ENCODE measurements at regions of chr6 and their contacts with region 1.

Region 1: DNA sequence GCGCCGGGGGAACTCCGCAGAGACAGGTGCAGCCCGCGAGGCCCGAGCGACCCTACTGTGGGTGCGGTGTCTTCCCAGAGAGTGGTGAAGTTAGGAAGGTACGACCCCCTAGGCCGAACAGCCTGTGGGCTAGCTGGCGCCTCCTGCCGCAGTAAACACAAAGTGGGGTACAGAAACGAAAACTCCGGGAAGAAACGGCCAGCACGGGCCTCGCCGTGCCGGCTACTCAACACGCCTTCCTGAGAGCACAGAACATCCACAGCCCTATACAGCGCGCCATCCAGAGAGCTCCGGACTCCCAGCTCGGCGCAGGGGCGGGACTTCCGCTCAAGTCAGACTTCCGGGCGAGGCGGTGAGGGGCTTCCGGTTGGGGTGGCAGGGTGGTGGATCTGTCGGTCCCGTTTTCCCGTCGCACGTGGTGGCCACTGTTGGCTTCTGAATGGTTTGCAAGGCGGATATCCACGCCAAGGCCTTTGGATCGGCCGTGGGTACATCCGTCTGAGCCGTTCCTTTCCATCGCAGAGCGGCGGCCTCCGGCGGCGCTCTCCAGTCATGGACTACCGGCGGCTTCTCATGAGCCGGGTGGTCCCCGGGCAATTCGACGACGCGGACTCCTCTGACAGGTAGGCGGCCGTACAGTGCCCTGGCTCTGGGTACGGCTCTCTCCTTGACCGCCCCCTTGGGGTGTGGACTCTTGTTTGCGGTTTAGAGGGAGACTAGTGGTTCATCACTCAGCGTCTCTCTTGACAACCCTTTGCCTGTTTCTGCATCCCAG is at the starts of genes CAGE1 and RIOK1:
- DNase-seq: peak; percentile 86 to 96
- H3K4me3 ChIP-seq: peak within 1 kb of the TSS; percentile 80
- H3K27ac ChIP-seq: peak within 1 kb of the TSS; percentile 89
- H3K4me1 ChIP-seq: peaks cover 19% of the 10 kb centered on the region
- H3K27me3 ChIP-seq: no peaks in the 10 kb centered on the region
- CTCF ChIP-seq: 0 out of 2 replicates have a peak, but pooled peaks have one; percentile 29
- total RNA-seq, gene CAGE1: 0.13 TPM in 2 replicates
- total RNA-seq, gene RIOK1: 16.9 and 24.9 TPM in 2 replicates

Region 2: DNA sequence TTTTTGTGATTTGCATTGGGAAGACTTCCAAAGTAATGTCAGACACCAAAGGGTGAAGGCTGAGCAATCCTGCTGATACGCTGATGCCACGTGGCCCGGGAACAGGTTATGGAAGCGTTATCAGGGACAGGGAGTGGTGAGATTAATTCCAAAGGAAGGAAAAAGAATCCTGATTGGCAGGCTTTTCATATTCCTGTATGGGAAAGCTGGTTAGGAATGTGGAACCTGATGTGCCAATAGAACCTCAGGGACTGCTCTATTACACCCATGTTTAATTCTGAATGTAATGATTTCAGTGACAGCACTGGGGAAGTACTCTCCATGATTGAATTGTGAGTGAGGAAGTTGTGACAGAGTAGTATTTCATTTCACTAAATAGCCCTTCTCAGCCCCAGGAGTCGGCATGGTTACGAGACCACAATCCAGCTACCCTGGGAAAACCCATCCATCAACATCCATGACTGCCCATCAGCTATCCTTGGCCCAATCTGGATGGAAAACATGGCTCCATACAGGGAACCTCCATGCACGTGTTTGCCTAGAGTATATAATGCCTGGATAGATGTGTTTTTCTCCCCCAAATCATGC is 1118.6 kb before region 1 on chr6:
- CTCF ChIA-PET with region 1: no interaction called
- POLR2A ChIA-PET with region 1: no interaction called
- intact Hi-C with region 1: no loop called
- DNase-seq: no peak
- H3K4me3 ChIP-seq: no peak overlapping the region
- H3K27ac ChIP-seq: no peak overlapping the region
- H3K4me1 ChIP-seq: no peaks in the 10 kb centered on the region
- H3K27me3 ChIP-seq: no peaks in the 10 kb centered on the region
- CTCF ChIP-seq: no peak

Region 3: DNA sequence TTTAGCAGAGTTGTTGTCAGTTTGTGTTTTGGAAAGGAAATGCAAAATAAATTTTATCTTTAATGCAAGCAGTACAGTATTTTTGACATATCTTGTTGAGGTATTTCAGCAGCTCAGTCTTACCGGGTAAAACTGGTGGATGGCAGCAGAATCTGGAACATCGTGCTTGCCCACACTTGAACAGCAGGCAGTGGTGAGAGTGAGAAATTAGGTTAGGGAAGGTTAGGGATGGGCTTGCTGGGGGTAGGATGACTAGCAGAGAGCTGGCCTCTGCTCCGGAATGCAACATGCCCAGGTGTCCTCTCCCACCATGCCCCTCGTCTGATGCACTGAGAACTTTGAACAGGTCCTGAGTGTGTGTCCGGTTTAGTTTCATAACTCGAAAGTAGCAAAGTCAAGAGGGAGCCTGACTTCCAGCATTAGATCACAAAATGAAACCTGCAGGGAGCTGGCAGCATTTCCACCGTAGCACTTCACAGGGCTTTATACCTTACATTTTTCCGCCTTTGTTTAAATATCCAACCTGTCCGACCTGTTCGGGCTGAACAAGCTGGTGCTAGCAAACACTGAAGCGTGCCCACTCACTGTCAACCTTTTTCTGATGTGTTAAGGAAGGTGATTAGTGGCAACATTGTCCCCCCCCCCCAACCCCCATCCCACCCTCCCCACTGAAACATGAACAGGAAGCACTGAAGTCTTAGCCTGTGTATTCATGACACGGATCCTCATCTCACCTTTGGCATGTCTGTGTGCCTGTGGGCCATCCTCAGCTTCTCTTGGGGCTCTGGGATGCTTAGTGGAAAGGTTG is 188.6 kb before region 1 on chr6:
- CTCF ChIA-PET with region 1: no interaction called
- POLR2A ChIA-PET with region 1: no interaction called
- intact Hi-C with region 1: no loop called
- DNase-seq: peak; percentile 74 to 88
- H3K4me3 ChIP-seq: peak overlapping the region; percentile 39; the same call in 1 of the 2 replicates
- H3K27ac ChIP-seq: peak overlapping the region; percentile 92
- H3K4me1 ChIP-seq: peaks cover 36% of the 10 kb centered on the region
- H3K27me3 ChIP-seq: no peaks in the 10 kb centered on the region
- CTCF ChIP-seq: no peak

Region 4: DNA sequence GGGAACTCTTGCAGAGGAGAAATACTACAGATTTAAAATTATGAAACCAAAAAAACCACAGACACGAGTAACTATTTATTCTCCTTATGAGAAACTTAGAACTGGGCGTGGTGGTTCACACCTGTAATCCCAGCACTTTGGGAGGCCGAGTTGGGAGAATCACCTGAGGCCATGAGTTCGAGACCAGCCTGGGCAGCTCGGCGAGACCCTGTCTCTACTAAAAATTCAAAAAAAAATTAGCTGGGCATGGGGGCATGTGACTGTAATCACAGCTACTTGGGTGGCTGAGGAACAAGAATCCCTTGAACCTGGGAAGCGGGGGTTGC is 113.5 kb before region 1 on chr6:
- CTCF ChIA-PET with region 1: no interaction called
- POLR2A ChIA-PET with region 1: no interaction called
- intact Hi-C with region 1: loop called (anchors 1 kb)
- DNase-seq: no peak
- H3K4me3 ChIP-seq: no peak overlapping the region
- H3K27ac ChIP-seq: no peak overlapping the region
- H3K4me1 ChIP-seq: no peaks in the 10 kb centered on the region
- H3K27me3 ChIP-seq: no peaks in the 10 kb centered on the region
- CTCF ChIP-seq: no peak; the same call in 1 of the 2 replicates

Region 5: GRCh38 chr6:7312616-7313504 is 76.8 kb before region 1 on chr6 and contains the start of gene SSR1:
- CTCF ChIA-PET with region 1: no interaction called
- POLR2A ChIA-PET with region 1: interaction called, 9 read pairs
- intact Hi-C with region 1: loop called (anchors 1 kb)
- DNase-seq: peak; percentile 84 to 98
- H3K4me3 ChIP-seq: peak within 1 kb of the TSS; percentile 94
- H3K27ac ChIP-seq: peak within 1 kb of the TSS; percentile 97
- H3K4me1 ChIP-seq: peaks cover 22% of the 10 kb centered on the region
- H3K27me3 ChIP-seq: no peaks in the 10 kb centered on the region
- CTCF ChIP-seq: no peak
- total RNA-seq, gene SSR1: 104 and 118 TPM in 2 replicates

Region 6: DNA sequence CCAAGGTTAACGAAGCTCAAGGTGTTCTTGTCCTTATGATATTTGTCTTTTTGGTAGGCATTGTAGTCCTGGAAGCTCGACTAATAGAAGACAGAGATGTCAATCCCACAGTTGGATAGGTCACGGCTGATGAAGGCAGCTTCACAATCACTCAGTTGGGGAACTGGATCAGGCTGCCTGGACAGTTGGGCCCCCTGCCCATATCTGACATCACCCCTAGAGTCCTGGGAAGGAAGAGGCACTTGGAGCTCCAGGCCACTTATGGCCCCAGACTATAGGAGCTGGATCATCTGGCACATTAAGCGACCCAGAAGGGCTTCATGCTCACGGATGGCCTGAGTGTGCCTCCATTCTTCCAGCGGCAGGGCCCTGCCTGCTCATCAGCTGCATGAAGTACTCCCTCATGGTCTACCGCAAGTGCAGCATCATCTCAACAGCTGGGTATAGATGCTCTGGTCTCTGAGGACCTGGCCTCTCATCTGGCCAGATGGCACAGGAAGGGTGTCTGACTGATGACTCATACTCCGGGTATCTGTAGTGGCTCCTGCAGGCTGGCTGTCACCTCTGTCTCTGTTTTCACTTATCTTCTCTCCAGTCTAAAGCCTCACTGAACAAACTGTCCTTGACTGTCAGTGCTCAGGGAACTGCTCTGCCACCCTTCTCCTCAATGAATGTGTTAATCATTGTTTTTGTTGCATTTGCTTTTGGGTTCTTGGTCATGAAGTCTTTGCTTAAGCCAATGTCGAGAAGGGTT is 47.5 kb before region 1 on chr6:
- CTCF ChIA-PET with region 1: no interaction called
- POLR2A ChIA-PET with region 1: no interaction called
- intact Hi-C with region 1: loop called (anchors 2 kb)
- DNase-seq: peak in 1 of 2 experiments; percentile 37
- H3K4me3 ChIP-seq: no peak overlapping the region
- H3K27ac ChIP-seq: no peak overlapping the region
- H3K4me1 ChIP-seq: peaks cover 12% of the 10 kb centered on the region
- H3K27me3 ChIP-seq: no peaks in the 10 kb centered on the region
- CTCF ChIP-seq: no peak

Region 7: GRCh38 chr6:7496266-7496875 is 106.7 kb after region 1 on chr6:
- CTCF ChIA-PET with region 1: no interaction called
- POLR2A ChIA-PET with region 1: no interaction called
- intact Hi-C with region 1: no loop called
- DNase-seq: peak in 1 of 2 experiments; percentile 52
- H3K4me3 ChIP-seq: no peak overlapping the region
- H3K27ac ChIP-seq: no peak overlapping the region
- H3K4me1 ChIP-seq: no peaks in the 10 kb centered on the region
- H3K27me3 ChIP-seq: no peaks in the 10 kb centered on the region
- CTCF ChIP-seq: no peak